ENCODE measurements at regions of chr12 and their contacts with region 1.

Region 1: GRCh38 chr12:12927211-12928079 is 24.5 kb downstream of the GPRC5D start:
- DNase-seq: peak; percentile 47
- H3K4me3 ChIP-seq: peak overlapping the region; percentile 61
- H3K27ac ChIP-seq: peak overlapping the region; percentile 31
- H3K27me3 ChIP-seq: no peaks in the 10 kb centered on the region
- CTCF ChIP-seq: no peak

Region 2: GRCh38 chr12:12696562-12697383 is 230.7 kb before region 1 on chr12:
- CTCF ChIA-PET with region 1: no interaction called
- POLR2A ChIA-PET with region 1: no interaction called
- DNase-seq: peak; percentile 61
- H3K4me3 ChIP-seq: peak overlapping the region; percentile 67
- H3K27ac ChIP-seq: peak overlapping the region; percentile 93
- H3K27me3 ChIP-seq: peaks cover 8% of the 10 kb centered on the region
- CTCF ChIP-seq: 0 out of 2 replicates have a peak, but pooled peaks have one; percentile 8

Region 3: GRCh38 chr12:12899530-12900380 is 27.7 kb before region 1 on chr12:
- CTCF ChIA-PET with region 1: no interaction called
- POLR2A ChIA-PET with region 1: no interaction called
- DNase-seq: peak; percentile 94
- H3K4me3 ChIP-seq: peak overlapping the region; percentile 31; the same call in 1 of the 2 replicates
- H3K27ac ChIP-seq: peak overlapping the region; percentile 92
- H3K27me3 ChIP-seq: no peaks in the 10 kb centered on the region
- CTCF ChIP-seq: no peak

Region 4: DNA sequence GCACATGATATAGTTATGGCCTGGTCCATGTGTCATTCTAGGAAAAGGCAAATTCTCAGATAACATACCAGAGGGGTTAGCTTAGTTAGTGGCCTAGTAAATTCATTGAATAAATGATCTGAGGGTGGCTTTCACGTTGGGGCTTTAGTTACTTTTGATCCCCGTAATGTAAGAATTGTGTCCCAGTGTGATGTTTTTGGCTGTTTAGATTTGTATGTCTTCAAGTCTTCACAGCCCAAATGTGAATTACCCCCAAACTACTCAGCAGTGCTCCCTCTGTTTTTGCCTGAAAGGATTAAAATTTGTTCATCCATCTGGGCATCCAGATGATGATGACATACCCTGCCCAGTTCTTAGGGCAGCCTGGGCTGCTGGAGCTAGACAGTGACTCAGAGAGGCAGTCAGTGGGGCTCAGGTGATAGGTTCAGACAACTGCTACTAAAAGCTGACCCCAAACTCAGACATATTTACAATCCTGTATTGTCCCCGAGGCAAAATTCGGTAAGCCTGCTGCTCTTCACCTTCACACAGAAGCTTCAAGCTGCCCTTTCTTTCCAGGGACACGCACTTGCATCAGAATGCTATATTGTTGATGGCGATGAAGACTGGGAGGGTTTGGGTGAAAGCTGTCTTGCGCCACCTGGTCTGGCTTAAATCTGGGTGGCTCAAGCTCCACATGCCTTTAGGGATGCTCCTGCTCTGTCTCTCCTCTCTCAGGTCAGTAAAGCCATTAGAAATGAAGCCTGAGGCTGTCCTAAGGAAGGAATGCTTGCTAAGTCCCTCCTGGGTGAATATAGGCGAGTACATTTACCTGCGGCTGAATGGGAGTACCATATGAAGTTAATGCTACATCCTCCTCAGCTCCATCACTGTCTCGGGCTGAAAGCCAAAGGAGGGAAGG is 14.3 kb after region 1 on chr12:
- CTCF ChIA-PET with region 1: no interaction called
- POLR2A ChIA-PET with region 1: no interaction called
- DNase-seq: no peak
- H3K4me3 ChIP-seq: no peak overlapping the region
- H3K27ac ChIP-seq: no peak overlapping the region
- H3K27me3 ChIP-seq: no peaks in the 10 kb centered on the region
- CTCF ChIP-seq: no peak

Region 5: DNA sequence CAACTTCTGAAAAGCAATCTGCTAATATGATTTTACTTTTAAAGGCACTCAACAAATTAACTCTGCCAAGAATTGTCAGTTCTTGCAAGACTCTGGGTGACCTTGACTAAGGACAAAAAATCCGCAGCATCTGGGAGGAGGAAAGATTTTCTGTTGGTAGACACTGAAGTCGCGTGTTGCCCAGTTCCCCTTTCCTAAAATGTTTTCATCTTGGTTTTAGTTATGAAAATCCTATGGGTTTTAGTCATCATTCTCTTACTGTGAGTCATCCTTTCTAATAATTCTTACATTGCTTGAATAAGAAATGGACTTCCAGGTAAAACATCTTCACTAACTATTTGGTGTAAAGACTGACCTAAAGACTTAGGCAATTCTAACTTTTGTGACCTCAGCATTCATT is 166.9 kb after region 1 on chr12:
- CTCF ChIA-PET with region 1: no interaction called
- POLR2A ChIA-PET with region 1: interaction called, 13 read pairs
- DNase-seq: no peak
- H3K4me3 ChIP-seq: no peak overlapping the region
- H3K27ac ChIP-seq: no peak overlapping the region
- H3K27me3 ChIP-seq: no peaks in the 10 kb centered on the region
- CTCF ChIP-seq: no peak